PC-9 (cell line): ENCODE measurements at regions of chrX and their contacts with region 1.

Region 1: DNA sequence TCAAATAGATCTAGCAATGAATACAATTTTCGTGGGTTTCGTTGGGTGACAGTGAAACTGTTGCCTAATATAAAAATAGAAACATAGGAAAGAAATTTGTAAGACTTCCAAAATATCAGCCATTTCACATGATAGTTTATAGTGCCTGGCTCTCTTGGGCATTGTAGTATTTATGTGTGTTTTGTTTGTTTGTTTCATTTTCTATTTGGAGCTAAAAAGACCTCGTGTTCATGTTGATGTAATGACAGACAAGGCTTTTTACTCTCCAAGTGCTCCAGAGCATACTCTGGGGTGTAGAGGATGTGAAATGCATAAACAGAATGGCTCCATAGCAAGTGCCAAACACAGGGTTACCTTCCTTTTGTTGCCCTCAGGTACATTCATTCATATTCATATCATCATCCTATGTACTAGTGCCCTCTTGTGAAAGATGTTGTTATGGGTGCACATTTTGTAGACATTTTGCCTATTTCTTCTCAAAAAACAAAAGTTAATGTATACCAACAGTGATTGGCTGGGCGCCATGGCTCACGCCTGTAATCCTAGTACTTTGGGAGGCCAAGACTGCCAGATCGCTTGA is 100.7 kb upstream of the AMOT start:
- DNase-seq: no peak
- H3K4me3 ChIP-seq: no peak overlapping the region
- H3K27ac ChIP-seq: no peak overlapping the region
- H3K4me1 ChIP-seq: no peaks in the 10 kb centered on the region
- H3K27me3 ChIP-seq: no peaks in the 10 kb centered on the region
- CTCF ChIP-seq: peak; percentile 42; the same call in 1 of the 2 replicates

Region 2: GRCh38 chrX:112513154-112513553 is 428.1 kb before region 1 on chrX:
- CTCF ChIA-PET with region 1: no interaction called
- POLR2A ChIA-PET with region 1: no interaction called
- intact Hi-C with region 1: loop called (anchors 5 kb)
- DNase-seq: no peak
- H3K4me3 ChIP-seq: 0 out of 2 replicates have a peak overlapping the region, but pooled peaks have one; percentile 8
- H3K27ac ChIP-seq: no peak overlapping the region
- H3K4me1 ChIP-seq: no peaks in the 10 kb centered on the region
- H3K27me3 ChIP-seq: no peaks in the 10 kb centered on the region
- CTCF ChIP-seq: no peak

Region 3: GRCh38 chrX:112642349-112642748 is 298.9 kb before region 1 on chrX:
- CTCF ChIA-PET with region 1: no interaction called
- POLR2A ChIA-PET with region 1: no interaction called
- intact Hi-C with region 1: loop called (anchors 10 kb)
- DNase-seq: peak; percentile 18 to 37
- H3K4me3 ChIP-seq: no peak overlapping the region
- H3K27ac ChIP-seq: no peak overlapping the region
- H3K4me1 ChIP-seq: no peaks in the 10 kb centered on the region
- H3K27me3 ChIP-seq: no peaks in the 10 kb centered on the region
- CTCF ChIP-seq: peak; percentile 72

Region 4: DNA sequence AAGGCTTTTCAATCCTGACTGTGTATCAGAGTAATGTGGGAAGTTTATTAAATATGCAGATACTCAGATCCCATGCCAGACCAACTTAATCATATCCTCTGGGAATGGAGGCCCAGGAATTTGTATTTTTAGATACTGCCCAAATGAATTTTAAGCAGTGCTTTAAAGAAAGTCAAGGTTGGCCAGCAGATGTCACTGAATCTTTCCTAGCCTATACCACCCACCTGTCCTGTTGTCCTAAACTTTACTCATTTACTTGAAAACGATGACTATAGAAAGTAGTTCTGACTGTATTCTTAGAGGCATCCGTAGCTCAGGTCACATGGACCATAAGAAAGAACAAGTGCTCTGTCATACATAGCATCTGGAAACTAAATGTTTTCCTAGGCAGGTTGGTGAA is 180.6 kb before region 1 on chrX:
- CTCF ChIA-PET with region 1: no interaction called
- POLR2A ChIA-PET with region 1: no interaction called
- intact Hi-C with region 1: loop called (anchors 1 kb)
- DNase-seq: no peak
- H3K4me3 ChIP-seq: no peak overlapping the region
- H3K27ac ChIP-seq: no peak overlapping the region
- H3K4me1 ChIP-seq: no peaks in the 10 kb centered on the region
- H3K27me3 ChIP-seq: no peaks in the 10 kb centered on the region
- CTCF ChIP-seq: peak; percentile 33; the same call in 1 of the 2 replicates

Region 5: GRCh38 chrX:112913807-112914206 is 27.5 kb before region 1 on chrX:
- CTCF ChIA-PET with region 1: interaction called, 16 read pairs
- POLR2A ChIA-PET with region 1: no interaction called
- intact Hi-C with region 1: no loop called
- DNase-seq: no peak
- H3K4me3 ChIP-seq: no peak overlapping the region
- H3K27ac ChIP-seq: no peak overlapping the region
- H3K4me1 ChIP-seq: no peaks in the 10 kb centered on the region
- H3K27me3 ChIP-seq: no peaks in the 10 kb centered on the region
- CTCF ChIP-seq: peak; percentile 60

Region 6: DNA sequence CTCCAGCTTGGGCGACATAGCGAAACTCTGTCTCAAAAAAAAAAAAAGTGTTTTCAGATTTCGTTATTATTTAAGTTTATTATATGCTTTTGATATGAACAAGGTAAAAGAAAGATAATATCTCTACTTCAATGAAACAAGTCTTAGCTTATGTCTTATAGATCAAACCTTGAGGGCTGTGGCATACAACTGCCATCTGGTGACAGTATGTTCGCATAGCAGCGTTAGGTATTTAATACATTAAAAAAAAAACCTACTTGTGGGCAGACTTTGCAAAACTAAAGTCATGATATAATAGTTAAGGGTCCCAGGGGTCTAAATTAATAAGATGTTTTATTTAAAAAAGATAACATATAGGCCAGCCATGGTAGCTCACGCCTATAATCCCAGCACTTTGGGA is 60.5 kb after region 1 on chrX:
- CTCF ChIA-PET with region 1: interaction called, 6 read pairs
- POLR2A ChIA-PET with region 1: no interaction called
- intact Hi-C with region 1: loop called (anchors 1 kb)
- DNase-seq: peak; percentile 35 to 72
- H3K4me3 ChIP-seq: no peak overlapping the region
- H3K27ac ChIP-seq: no peak overlapping the region
- H3K4me1 ChIP-seq: no peaks in the 10 kb centered on the region
- H3K27me3 ChIP-seq: no peaks in the 10 kb centered on the region
- CTCF ChIP-seq: peak; percentile 85